Activated CD8-positive, alpha-beta T cell treated with anti-CD3 and anti-CD28 coated beads for 36 hours (primary cell): ENCODE measurements at regions of chr2 and their contacts with region 1.

Region 1: GRCh38 chr2:42964439-42965083 is 172.2 kb upstream of the HAAO start:
- DNase-seq: no peak
- ATAC-seq: no peak
- H3K4me3 Mint-ChIP-seq: no peak overlapping the region
- H3K27ac Mint-ChIP-seq: no peak overlapping the region
- H3K4me1 Mint-ChIP-seq: peaks cover 16% of the 10 kb centered on the region
- H3K27me3 Mint-ChIP-seq: peaks cover 14% of the 10 kb centered on the region
- CTCF ChIP-seq: no peak

Region 2: GRCh38 chr2:42974721-42975717 is 10.5 kb after region 1 on chr2:
- CTCF ChIA-PET with region 1: interaction called, 35 read pairs
- POLR2A ChIA-PET with region 1: no interaction called
- intact Hi-C with region 1: no loop called
- DNase-seq: peak; percentile 64
- ATAC-seq: peak; percentile 75
- H3K4me3 Mint-ChIP-seq: no peak overlapping the region
- H3K27ac Mint-ChIP-seq: no peak overlapping the region
- H3K4me1 Mint-ChIP-seq: peaks cover 16% of the 10 kb centered on the region
- H3K27me3 Mint-ChIP-seq: no peaks in the 10 kb centered on the region
- CTCF ChIP-seq: peak; percentile 85

Region 3: GRCh38 chr2:42987112-42987922 is 22.8 kb after region 1 on chr2:
- CTCF ChIA-PET with region 1: no interaction called
- POLR2A ChIA-PET with region 1: no interaction called
- intact Hi-C with region 1: no loop called
- DNase-seq: no peak
- ATAC-seq: no peak
- H3K4me3 Mint-ChIP-seq: no peak overlapping the region
- H3K27ac Mint-ChIP-seq: no peak overlapping the region
- H3K4me1 Mint-ChIP-seq: no peaks in the 10 kb centered on the region
- H3K27me3 Mint-ChIP-seq: no peaks in the 10 kb centered on the region
- CTCF ChIP-seq: no peak